Naive thymus-derived CD4-positive, alpha-beta T cell (primary cell): ENCODE measurements at regions of chr1 and their contacts with region 1.

Region 1: GRCh38 chr1:234963180-234963903 is 165.3 kb downstream of the TOMM20 start:
- DNase-seq: peak; percentile 55 to 90 (median 75)
- ATAC-seq: peak; percentile 93
- H3K4me3 ChIP-seq: peak overlapping the region; percentile 41
- H3K4me3 Mint-ChIP-seq: peak overlapping the region; percentile 68 to 87 (median 80)
- H3K27ac ChIP-seq: peak overlapping the region; percentile 79
- H3K27ac Mint-ChIP-seq: peak overlapping the region; percentile 88 to 97 (median 93)
- H3K4me1 ChIP-seq: peaks cover 36 to 55% of the 10 kb centered on the region in 2 donors
- H3K4me1 Mint-ChIP-seq: peaks cover 55 to 75% (median 69%) of the 10 kb centered on the region in 7 donors
- H3K27me3 ChIP-seq: no peaks in the 10 kb centered on the region
- H3K27me3 Mint-ChIP-seq: no peaks in the 10 kb centered on the region

Region 2: GRCh38 chr1:234599617-234600417 is 363.5 kb before region 1 on chr1:
- CTCF ChIA-PET with region 1: interaction called, 3 read pairs
- POLR2A ChIA-PET with region 1: interaction called, 3 read pairs
- intact Hi-C with region 1: loop called in 1 of 2 experiments (anchors 1 kb)
- DNase-seq: peak; percentile 52 to 88 (median 62)
- ATAC-seq: peak; percentile 74
- H3K4me3 ChIP-seq: peak overlapping the region; percentile 61
- H3K4me3 Mint-ChIP-seq: peak overlapping the region; percentile 75 to 97 (median 89)
- H3K27ac ChIP-seq: peak overlapping the region; percentile 96
- H3K27ac Mint-ChIP-seq: peak overlapping the region; percentile 87 to 99 (median 95)
- H3K4me1 ChIP-seq: peaks cover 51 to 54% of the 10 kb centered on the region in 2 donors
- H3K4me1 Mint-ChIP-seq: peaks cover 24 to 68% (median 56%) of the 10 kb centered on the region in 7 donors
- H3K27me3 ChIP-seq: no peaks in the 10 kb centered on the region
- H3K27me3 Mint-ChIP-seq: no peaks in the 10 kb centered on the region

Region 3: GRCh38 chr1:234912548-234913277 is 50.6 kb before region 1 on chr1:
- CTCF ChIA-PET with region 1: no interaction called
- POLR2A ChIA-PET with region 1: no interaction called
- intact Hi-C with region 1: loop called in 1 of 2 experiments (anchors 5 kb)
- DNase-seq: no peak
- ATAC-seq: no peak
- H3K4me3 ChIP-seq: no peak overlapping the region
- H3K4me3 Mint-ChIP-seq: peak overlapping the region in 4 of 10 donors; percentile 9 to 51 (median 19)
- H3K27ac ChIP-seq: no peak overlapping the region
- H3K27ac Mint-ChIP-seq: peak overlapping the region in 7 of 9 donors; percentile 21 to 85 (median 67)
- H3K4me1 ChIP-seq: peaks cover 18% of the 10 kb centered on the region in 2 donors
- H3K4me1 Mint-ChIP-seq: peaks cover 26 to 39% (median 31%) of the 10 kb centered on the region in 7 donors
- H3K27me3 ChIP-seq: no peaks in the 10 kb centered on the region
- H3K27me3 Mint-ChIP-seq: no peaks in the 10 kb centered on the region

Region 4: GRCh38 chr1:234978397-234979295 is 15.3 kb after region 1 on chr1:
- CTCF ChIA-PET with region 1: no interaction called
- POLR2A ChIA-PET with region 1: interaction called, 22 read pairs
- intact Hi-C with region 1: loop called (anchors 1 to 2 kb)
- DNase-seq: peak in 4 of 9 donors; percentile 9 to 49 (median 40)
- ATAC-seq: peak; percentile 62
- H3K4me3 ChIP-seq: no peak overlapping the region
- H3K4me3 Mint-ChIP-seq: peak overlapping the region; percentile 16 to 78 (median 69)
- H3K27ac ChIP-seq: peak overlapping the region; percentile 18
- H3K27ac Mint-ChIP-seq: peak overlapping the region; percentile 66 to 94 (median 81)
- H3K4me1 ChIP-seq: peaks cover 34 to 48% of the 10 kb centered on the region in 2 donors
- H3K4me1 Mint-ChIP-seq: peaks cover 38 to 79% (median 45%) of the 10 kb centered on the region in 7 donors
- H3K27me3 ChIP-seq: no peaks in the 10 kb centered on the region
- H3K27me3 Mint-ChIP-seq: no peaks in the 10 kb centered on the region

Region 5: GRCh38 chr1:235075188-235075926 is 112.0 kb after region 1 on chr1:
- CTCF ChIA-PET with region 1: no interaction called
- POLR2A ChIA-PET with region 1: no interaction called
- intact Hi-C with region 1: loop called (anchors 5 kb)
- DNase-seq: peak in 1 of 9 donors; percentile 76
- ATAC-seq: peak; percentile 44
- H3K4me3 ChIP-seq: peak overlapping the region; percentile 31
- H3K4me3 Mint-ChIP-seq: peak overlapping the region in 1 of 10 donors; percentile 65
- H3K27ac ChIP-seq: no peak overlapping the region
- H3K27ac Mint-ChIP-seq: peak overlapping the region in 1 of 9 donors; percentile 90
- H3K4me1 ChIP-seq: peaks cover 0 to 10% of the 10 kb centered on the region in 2 donors
- H3K4me1 Mint-ChIP-seq: peaks cover 0 to 38% (median 6%) of the 10 kb centered on the region in 7 donors
- H3K27me3 ChIP-seq: no peaks in the 10 kb centered on the region
- H3K27me3 Mint-ChIP-seq: no peaks in the 10 kb centered on the region